Heart left ventricle (tissue), 16 donors: ENCODE measurements at regions of chr14 and their contacts with region 1.

Region 1: GRCh38 chr14:90758028-90758889 is 58.0 kb downstream of the TTC7B start:
- DNase-seq: peak; percentile 92 to 98 (median 95)
- ATAC-seq: peak; percentile 75 to 92 (median 91)
- H3K4me3 ChIP-seq: peak overlapping the region; percentile 15 to 74 (median 61)
- H3K27ac ChIP-seq: peak overlapping the region; percentile 91 to 98 (median 94)
- H3K4me1 ChIP-seq: peaks cover 0 to 31% (median 22%) of the 10 kb centered on the region in 12 donors
- H3K27me3 ChIP-seq: no peaks in the 10 kb centered on the region
- CTCF ChIP-seq: peak; percentile 81 to 97 (median 92)
- POLR2A ChIP-seq: peak in 1 of 2 donors; percentile 57

Region 2: DNA sequence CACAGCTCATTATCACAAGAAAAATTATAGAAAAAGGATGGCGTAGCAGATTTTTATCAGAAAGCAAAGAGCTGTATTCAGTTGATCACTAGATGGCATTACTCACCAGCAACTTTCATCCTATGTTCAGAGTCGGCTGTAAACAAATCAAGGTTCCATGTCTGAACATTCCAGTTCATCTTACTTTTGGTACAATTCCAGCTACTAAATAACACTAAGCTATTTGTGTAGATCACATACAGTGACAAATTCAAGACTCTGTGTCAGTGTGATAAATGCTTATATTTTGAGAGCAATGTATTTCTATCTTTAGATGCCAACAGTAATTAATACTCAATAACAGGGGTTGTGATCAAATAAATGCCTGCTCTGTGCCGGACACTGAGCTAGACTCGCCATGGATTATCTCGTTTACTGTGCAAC is 456.6 kb before region 1 on chr14:
- intact Hi-C with region 1: loop called in 9 of 10 experiments (anchors 1 to 10 kb)
- DNase-seq: no peak
- ATAC-seq: peak; percentile 23 to 70 (median 42)
- H3K4me3 ChIP-seq: no peak overlapping the region
- H3K27ac ChIP-seq: peak overlapping the region in 11 of 12 donors; percentile 11 to 73 (median 42)
- H3K4me1 ChIP-seq: peaks cover 5 to 43% (median 16%) of the 10 kb centered on the region in 12 donors
- H3K27me3 ChIP-seq: no peaks in the 10 kb centered on the region
- CTCF ChIP-seq: peak; percentile 30 to 74 (median 60)
- POLR2A ChIP-seq: no peak

Region 3: GRCh38 chr14:90383075-90383730 is 375.1 kb before region 1 on chr14:
- intact Hi-C with region 1: loop called in 4 of 10 experiments (anchors 1 to 5 kb)
- DNase-seq: peak; percentile 100
- ATAC-seq: peak; percentile 93 to 98 (median 96)
- H3K4me3 ChIP-seq: peak overlapping the region; percentile 47 to 80 (median 66)
- H3K27ac ChIP-seq: peak overlapping the region; percentile 98 to 100 (median 99)
- H3K4me1 ChIP-seq: peaks cover 4 to 44% (median 27%) of the 10 kb centered on the region in 12 donors
- H3K27me3 ChIP-seq: no peaks in the 10 kb centered on the region
- CTCF ChIP-seq: peak in 7 of 12 donors; percentile 10 to 31 (median 25)
- POLR2A ChIP-seq: peak; percentile 31 to 91

Region 4: DNA sequence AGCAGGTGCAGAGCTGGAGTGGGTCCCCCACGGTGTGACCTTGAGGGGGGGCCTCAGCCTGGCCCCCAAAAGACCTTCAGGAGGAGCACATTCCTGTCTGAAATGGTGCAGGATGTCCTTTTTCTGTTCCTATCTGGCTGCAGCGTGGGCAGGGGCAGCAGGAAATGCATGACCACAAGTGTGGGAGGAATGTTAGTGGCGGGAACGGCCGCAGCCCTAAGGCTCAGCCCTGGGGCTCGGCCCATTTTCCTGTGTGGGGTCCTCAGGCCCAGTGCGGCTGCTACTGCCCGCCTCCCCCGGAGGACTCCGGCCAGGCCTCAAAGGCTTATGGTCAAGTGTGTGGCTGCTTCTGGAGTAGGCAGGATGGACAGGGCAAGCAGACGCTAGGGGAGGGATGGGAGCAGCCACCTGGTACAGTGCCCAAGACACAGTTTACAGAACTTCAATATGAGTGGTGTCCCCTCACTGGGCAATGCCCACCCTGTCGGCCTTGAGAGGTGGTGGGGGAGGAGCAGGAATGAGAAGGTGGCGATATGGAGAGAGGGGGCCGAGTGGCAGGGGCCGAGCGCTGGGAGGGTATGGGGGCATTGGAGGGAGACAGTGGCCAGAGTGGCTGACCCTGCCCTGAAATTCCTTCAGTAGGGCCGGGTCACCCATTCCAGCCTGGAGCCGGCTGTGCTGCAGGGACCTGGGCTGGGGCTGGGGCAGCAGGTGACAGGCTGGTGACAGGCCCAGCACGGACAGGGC is 224.0 kb before region 1 on chr14:
- intact Hi-C with region 1: no loop called
- DNase-seq: peak in 4 of 5 donors; percentile 52 to 65 (median 56)
- ATAC-seq: peak in 3 of 4 donors; percentile 27 to 56 (median 47)
- H3K4me3 ChIP-seq: no peak overlapping the region
- H3K27ac ChIP-seq: peak overlapping the region in 11 of 12 donors; percentile 24 to 90 (median 75)
- H3K4me1 ChIP-seq: peaks cover 0 to 42% (median 34%) of the 10 kb centered on the region in 12 donors
- H3K27me3 ChIP-seq: no peaks in the 10 kb centered on the region
- CTCF ChIP-seq: no peak
- POLR2A ChIP-seq: no peak

Region 5: DNA sequence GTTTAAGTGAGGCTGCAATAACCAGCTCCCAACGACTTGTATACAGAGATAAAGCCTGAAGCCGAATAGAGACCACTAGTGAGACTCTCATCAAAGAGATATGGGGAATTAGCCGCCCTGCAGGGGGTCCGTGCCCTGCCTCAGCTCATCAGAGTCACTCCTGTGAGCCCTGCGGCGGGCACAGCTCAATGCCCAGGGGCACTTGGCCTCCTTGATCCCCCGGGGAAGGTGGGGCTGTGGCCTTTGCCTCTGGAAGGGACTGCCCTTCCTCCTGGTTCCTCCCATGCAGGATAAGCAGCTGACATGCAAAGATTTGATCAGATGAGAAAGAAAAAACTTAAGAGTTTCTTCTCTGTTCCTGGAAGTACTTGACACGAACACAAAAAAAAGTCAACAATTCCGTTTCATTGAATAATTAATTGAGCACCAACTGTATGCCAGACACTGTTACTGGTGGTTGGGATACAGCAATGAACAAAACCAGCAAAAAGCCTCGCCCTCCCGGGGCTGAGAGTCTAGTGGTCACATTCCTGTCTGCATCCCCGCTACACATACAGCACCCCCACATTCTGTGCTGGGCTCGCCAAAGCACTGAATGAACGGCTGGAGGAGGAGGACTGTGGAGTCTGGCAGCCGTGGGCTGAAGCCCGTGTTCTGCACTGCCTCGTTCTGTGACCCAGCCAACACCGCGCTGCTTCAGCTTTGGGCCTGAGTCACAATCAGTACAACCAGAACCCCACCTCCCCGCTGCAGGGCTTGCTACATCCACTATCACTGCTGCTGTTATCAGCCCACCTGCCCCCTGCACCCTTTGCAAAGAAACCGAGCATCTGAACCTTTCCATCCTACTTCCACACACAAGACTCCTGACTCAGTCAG is 47.6 kb after region 1 on chr14:
- intact Hi-C with region 1: loop called in 5 of 10 experiments (anchors 5 to 10 kb)
- DNase-seq: peak in 3 of 5 donors; percentile 46 to 67 (median 63)
- ATAC-seq: peak; percentile 35 to 58 (median 47)
- H3K4me3 ChIP-seq: no peak overlapping the region
- H3K27ac ChIP-seq: peak overlapping the region in 4 of 12 donors; percentile 3 to 54 (median 17)
- H3K4me1 ChIP-seq: peaks cover 7 to 77% (median 51%) of the 10 kb centered on the region in 12 donors
- H3K27me3 ChIP-seq: no peaks in the 10 kb centered on the region
- CTCF ChIP-seq: no peak
- POLR2A ChIP-seq: no peak